AG04450 (cell line): ENCODE measurements at regions of chr13 and their contacts with region 1.

Region 1: DNA sequence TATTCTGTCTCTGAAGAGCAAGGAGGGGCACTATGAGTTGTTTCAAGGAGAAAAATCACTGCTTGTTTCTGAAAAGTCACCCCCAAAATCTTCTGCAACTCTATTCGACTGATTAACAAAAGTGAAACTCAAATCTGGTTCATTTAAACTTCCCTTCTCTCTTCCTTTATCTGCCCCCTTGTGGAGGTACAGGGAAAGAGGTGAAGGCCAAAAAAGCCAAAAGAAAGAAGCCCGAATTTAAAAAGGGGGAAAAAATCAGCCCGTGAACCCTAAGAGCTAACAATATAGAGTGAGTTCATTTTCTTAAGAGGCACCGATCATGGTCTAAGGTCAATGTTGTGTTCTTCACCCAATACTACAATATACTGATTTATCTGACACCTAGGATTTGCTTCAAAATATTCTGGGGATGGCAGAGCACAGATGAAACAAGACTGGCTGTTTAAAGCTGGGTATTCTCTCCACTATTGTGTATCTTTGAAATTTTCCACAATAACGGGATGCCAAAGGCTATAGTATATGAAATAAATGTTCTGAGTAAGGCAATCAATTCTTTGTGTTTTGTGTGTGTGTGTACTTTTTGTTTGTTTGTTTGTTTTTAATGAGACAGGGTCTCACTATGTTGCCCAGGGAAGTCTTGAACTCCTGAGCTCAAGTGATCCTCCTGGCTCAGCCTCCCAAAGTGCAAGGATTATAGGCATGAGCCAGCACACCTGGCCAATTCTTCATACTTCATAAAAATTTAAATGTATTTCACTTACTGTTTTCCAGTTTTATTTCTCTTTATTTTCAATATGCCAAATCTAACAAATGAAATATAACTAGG is 55.0 kb upstream of the EEF1AKMT1 start:
- DNase-seq: no peak
- H3K4me3 ChIP-seq: peak overlapping the region; percentile 35
- H3K27ac ChIP-seq: no peak overlapping the region
- H3K27me3 ChIP-seq: no peaks in the 10 kb centered on the region
- CTCF ChIP-seq: peak; percentile 89

Region 2: DNA sequence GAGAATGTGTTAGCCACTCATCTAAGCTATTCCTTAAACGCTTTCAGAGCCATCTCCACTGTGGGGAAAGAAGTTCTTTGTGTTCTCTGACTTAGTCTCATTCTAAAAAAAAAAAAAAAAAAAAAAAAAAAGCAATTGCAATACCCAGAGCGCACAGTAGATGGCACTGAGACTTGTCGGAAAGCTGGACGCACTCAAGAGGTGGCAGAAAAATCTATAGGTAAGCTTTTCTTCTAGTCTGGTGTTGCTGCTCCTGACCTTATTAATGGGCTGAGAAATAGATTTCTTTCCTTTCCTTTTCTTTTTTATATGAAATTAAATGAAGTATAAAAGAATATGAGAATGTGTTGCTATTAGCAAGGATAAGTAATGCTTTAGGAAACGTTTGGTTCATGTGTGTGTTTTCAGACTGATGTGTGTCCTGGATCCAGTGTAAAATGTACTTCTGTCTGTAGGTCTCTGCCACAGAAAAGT is 631.4 kb before region 1 on chr13:
- CTCF ChIA-PET with region 1: interaction called, 10 read pairs
- POLR2A ChIA-PET with region 1: no interaction called
- DNase-seq: no peak
- H3K4me3 ChIP-seq: no peak overlapping the region
- H3K27ac ChIP-seq: no peak overlapping the region
- H3K27me3 ChIP-seq: peaks cover 56% of the 10 kb centered on the region
- CTCF ChIP-seq: peak; percentile 82

Region 3: GRCh38 chr13:20294497-20294896 is 534.3 kb before region 1 on chr13:
- CTCF ChIA-PET with region 1: no interaction called
- POLR2A ChIA-PET with region 1: no interaction called
- DNase-seq: no peak
- H3K4me3 ChIP-seq: no peak overlapping the region
- H3K27ac ChIP-seq: no peak overlapping the region
- H3K27me3 ChIP-seq: peaks cover 23% of the 10 kb centered on the region
- CTCF ChIP-seq: 0 out of 2 replicates have a peak, but pooled peaks have one; percentile 7

Region 4: GRCh38 chr13:20713751-20714150 is 115.0 kb before region 1 on chr13:
- CTCF ChIA-PET with region 1: interaction called, 94 read pairs
- POLR2A ChIA-PET with region 1: interaction called, 3 read pairs
- DNase-seq: no peak
- H3K4me3 ChIP-seq: no peak overlapping the region
- H3K27ac ChIP-seq: peak overlapping the region; percentile 12
- H3K27me3 ChIP-seq: peaks cover 2% of the 10 kb centered on the region
- CTCF ChIP-seq: no peak

Region 5: DNA sequence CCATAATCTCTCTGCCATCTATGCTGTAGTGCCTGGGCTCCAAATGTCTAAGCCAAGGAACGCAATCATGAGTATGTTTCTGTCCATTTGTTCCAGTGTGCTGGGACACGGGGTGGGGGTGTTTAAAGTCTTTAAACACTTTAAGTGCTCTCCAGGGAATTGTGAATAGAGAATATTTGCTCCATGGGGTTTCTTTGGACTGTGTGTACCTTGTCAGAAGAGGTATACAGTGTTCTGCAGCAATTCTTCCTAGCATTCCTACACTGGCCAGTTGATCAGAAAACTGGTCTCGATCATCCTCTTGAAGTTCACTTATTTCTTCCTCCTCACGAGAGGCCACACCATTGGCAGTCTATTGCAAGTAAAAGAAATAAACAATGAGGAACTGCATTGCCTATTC is 19.9 kb before region 1 on chr13:
- CTCF ChIA-PET with region 1: interaction called, 12 read pairs
- POLR2A ChIA-PET with region 1: no interaction called
- DNase-seq: no peak
- H3K4me3 ChIP-seq: no peak overlapping the region
- H3K27ac ChIP-seq: no peak overlapping the region
- H3K27me3 ChIP-seq: no peaks in the 10 kb centered on the region
- CTCF ChIP-seq: no peak

Region 6: GRCh38 chr13:20843166-20843565 is 14.4 kb after region 1 on chr13:
- CTCF ChIA-PET with region 1: interaction called, 50 read pairs
- POLR2A ChIA-PET with region 1: no interaction called
- DNase-seq: no peak
- H3K4me3 ChIP-seq: no peak overlapping the region
- H3K27ac ChIP-seq: no peak overlapping the region
- H3K27me3 ChIP-seq: no peaks in the 10 kb centered on the region
- CTCF ChIP-seq: no peak

Region 7: GRCh38 chr13:20924758-20925394 is 96.1 kb after region 1 on chr13:
- CTCF ChIA-PET with region 1: interaction called, 14 read pairs
- POLR2A ChIA-PET with region 1: no interaction called
- DNase-seq: peak; percentile 70
- H3K4me3 ChIP-seq: no peak overlapping the region
- H3K27ac ChIP-seq: no peak overlapping the region
- H3K27me3 ChIP-seq: no peaks in the 10 kb centered on the region
- CTCF ChIP-seq: peak; percentile 86